Mammary epithelial cell (primary cell): ENCODE measurements at regions of chr7 and their contacts with region 1.

Region 1: GRCh38 chr7:24979863-24980533 is at the start of gene OSBPL3:
- DNase-seq: peak; percentile 94
- H3K4me3 ChIP-seq: peak within 1 kb of the TSS; percentile 80 to 85 (median 81)
- H3K27ac ChIP-seq: peak within 1 kb of the TSS; percentile 85
- H3K4me1 ChIP-seq: peaks cover 45% of the 10 kb centered on the region
- H3K27me3 ChIP-seq: no peaks in the 10 kb centered on the region
- CTCF ChIP-seq: no peak
- total RNA-seq, gene OSBPL3: 42.7 to 64.8 TPM

Region 2: GRCh38 chr7:24665564-24666294 is 314.3 kb before region 1 on chr7:
- CTCF ChIA-PET with region 1: no interaction called
- dilution Hi-C with region 1: no loop called
- in situ Hi-C with region 1: no loop called
- intact Hi-C with region 1: loop called (anchors 5 kb)
- DNase-seq: peak; percentile 23
- H3K4me3 ChIP-seq: no peak overlapping the region
- H3K27ac ChIP-seq: no peak overlapping the region
- H3K4me1 ChIP-seq: peaks cover 10% of the 10 kb centered on the region
- H3K27me3 ChIP-seq: no peaks in the 10 kb centered on the region
- CTCF ChIP-seq: peak; percentile 59 to 68

Region 3: DNA sequence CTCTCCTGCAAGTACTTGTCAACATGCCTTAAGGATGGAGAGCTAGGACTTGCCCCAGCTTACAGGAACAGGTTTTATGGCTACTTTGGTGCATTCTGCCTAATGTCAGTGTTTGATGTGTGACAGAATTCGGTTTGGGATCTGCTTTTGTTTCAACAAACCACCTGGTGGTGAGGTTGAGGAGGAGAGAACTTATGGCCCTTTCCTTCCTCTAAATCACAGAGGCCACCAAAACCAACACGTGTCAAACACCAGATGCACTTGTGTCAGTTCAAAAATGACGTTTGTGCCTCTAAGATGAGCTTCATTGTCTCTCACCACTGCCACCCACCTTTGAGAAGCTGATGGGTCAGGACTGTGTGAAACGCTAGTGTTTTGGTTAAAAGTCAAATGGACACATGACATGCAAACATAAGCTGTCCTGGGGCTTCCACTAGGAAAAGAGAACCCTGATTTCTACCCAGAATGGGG is 83.9 kb before region 1 on chr7:
- CTCF ChIA-PET with region 1: no interaction called
- dilution Hi-C with region 1: no loop called
- in situ Hi-C with region 1: loop called in 1 of 2 experiments (anchors 10 kb)
- intact Hi-C with region 1: loop called (anchors 1 kb)
- DNase-seq: no peak
- H3K4me3 ChIP-seq: no peak overlapping the region
- H3K27ac ChIP-seq: no peak overlapping the region
- H3K4me1 ChIP-seq: peaks cover 20% of the 10 kb centered on the region
- H3K27me3 ChIP-seq: no peaks in the 10 kb centered on the region
- CTCF ChIP-seq: no peak

Region 4: GRCh38 chr7:25028370-25029021 is 48.5 kb after region 1 on chr7:
- CTCF ChIA-PET with region 1: interaction called, 27 read pairs
- dilution Hi-C with region 1: no loop called
- in situ Hi-C with region 1: no loop called
- intact Hi-C with region 1: loop called (anchors 1 kb)
- DNase-seq: peak; percentile 87
- H3K4me3 ChIP-seq: no peak overlapping the region
- H3K27ac ChIP-seq: peak overlapping the region; percentile 91
- H3K4me1 ChIP-seq: peaks cover 48% of the 10 kb centered on the region
- H3K27me3 ChIP-seq: no peaks in the 10 kb centered on the region
- CTCF ChIP-seq: no peak

Region 5: DNA sequence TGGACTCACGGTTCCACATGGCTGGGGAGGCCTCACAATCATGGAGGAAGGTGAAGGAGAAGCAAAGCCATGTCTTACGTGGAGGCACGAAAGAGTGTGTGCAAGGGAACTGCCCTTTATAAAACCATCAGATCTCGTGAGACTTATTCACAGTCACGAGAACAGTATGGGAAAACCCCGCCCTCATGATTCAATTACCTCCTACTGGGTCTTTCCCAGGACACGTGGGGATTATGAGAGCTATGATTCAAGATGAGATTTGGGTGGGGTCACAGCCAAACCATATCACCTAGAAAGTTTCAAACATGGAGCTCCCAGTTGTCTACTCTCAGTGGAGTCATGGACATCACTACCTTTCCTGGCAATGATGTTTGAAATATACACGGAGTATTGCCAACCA is 95.5 kb after region 1 on chr7:
- CTCF ChIA-PET with region 1: no interaction called
- dilution Hi-C with region 1: loop called (anchors 5 kb)
- in situ Hi-C with region 1: loop called in 1 of 2 experiments (anchors 5 kb)
- intact Hi-C with region 1: loop called (anchors 1 kb)
- DNase-seq: peak; percentile 59
- H3K4me3 ChIP-seq: no peak overlapping the region
- H3K27ac ChIP-seq: no peak overlapping the region
- H3K4me1 ChIP-seq: no peaks in the 10 kb centered on the region
- H3K27me3 ChIP-seq: no peaks in the 10 kb centered on the region
- CTCF ChIP-seq: no peak